ENCODE measurements at regions of chr2 and their contacts with region 1.

Region 1: DNA sequence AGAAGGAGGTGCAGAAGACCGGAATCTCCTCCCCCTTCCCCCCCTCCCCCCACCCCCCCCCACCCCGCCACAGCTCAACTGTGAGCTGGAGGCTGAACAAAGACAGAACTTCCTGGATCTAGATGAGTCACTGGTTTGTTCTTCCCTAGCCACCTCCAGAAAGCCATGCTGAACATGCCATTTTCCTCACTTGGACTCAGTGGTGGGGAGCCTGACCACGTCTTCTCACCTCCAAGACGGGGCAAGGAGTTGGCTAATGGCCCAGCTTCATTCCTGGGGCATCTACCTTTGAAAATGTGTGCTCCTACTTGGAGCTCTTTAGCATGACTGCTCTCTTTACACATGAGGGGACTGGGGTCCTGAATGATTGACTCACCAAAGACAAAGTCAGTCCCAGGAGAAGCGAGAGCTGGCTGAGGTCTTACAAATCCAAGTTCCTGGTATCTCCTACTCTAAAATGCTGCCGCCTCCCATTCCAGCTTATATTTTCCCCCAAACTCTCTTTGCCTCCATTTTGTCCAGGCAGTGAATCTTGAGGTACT is 22.6 kb upstream of the FZD5 start:
- H3K4me3 ChIP-seq: no peak overlapping the region
- H3K27ac ChIP-seq: peak overlapping the region; percentile 41; the same call in 1 of the 2 replicates
- H3K4me1 ChIP-seq: peaks cover 8% of the 10 kb centered on the region
- CTCF ChIP-seq: no peak

Region 2: GRCh38 chr2:207769597-207770486 is 22.5 kb before region 1 on chr2 and contains the start of gene FZD5:
- CTCF ChIA-PET with region 1: interaction called, 3 read pairs
- POLR2A ChIA-PET with region 1: interaction called, 14 read pairs
- H3K4me3 ChIP-seq: peak within 1 kb of the TSS; percentile 86
- H3K27ac ChIP-seq: peak within 1 kb of the TSS; percentile 91
- H3K4me1 ChIP-seq: peaks cover 17% of the 10 kb centered on the region
- CTCF ChIP-seq: 0 out of 2 replicates have a peak, but pooled peaks have one; percentile 55

Region 3: GRCh38 chr2:207830778-207831438 is 38.6 kb after region 1 on chr2:
- CTCF ChIA-PET with region 1: no interaction called
- POLR2A ChIA-PET with region 1: no interaction called
- H3K4me3 ChIP-seq: no peak overlapping the region
- H3K27ac ChIP-seq: no peak overlapping the region
- H3K4me1 ChIP-seq: peaks cover 5% of the 10 kb centered on the region
- CTCF ChIP-seq: no peak

Region 4: GRCh38 chr2:207863345-207863744 is 71.0 kb after region 1 on chr2:
- CTCF ChIA-PET with region 1: no interaction called
- POLR2A ChIA-PET with region 1: no interaction called
- H3K4me3 ChIP-seq: no peak overlapping the region
- H3K27ac ChIP-seq: no peak overlapping the region
- H3K4me1 ChIP-seq: no peaks in the 10 kb centered on the region
- CTCF ChIP-seq: no peak